PC-9 (cell line): ENCODE measurements at regions of chr18 and their contacts with region 1.

Region 1: DNA sequence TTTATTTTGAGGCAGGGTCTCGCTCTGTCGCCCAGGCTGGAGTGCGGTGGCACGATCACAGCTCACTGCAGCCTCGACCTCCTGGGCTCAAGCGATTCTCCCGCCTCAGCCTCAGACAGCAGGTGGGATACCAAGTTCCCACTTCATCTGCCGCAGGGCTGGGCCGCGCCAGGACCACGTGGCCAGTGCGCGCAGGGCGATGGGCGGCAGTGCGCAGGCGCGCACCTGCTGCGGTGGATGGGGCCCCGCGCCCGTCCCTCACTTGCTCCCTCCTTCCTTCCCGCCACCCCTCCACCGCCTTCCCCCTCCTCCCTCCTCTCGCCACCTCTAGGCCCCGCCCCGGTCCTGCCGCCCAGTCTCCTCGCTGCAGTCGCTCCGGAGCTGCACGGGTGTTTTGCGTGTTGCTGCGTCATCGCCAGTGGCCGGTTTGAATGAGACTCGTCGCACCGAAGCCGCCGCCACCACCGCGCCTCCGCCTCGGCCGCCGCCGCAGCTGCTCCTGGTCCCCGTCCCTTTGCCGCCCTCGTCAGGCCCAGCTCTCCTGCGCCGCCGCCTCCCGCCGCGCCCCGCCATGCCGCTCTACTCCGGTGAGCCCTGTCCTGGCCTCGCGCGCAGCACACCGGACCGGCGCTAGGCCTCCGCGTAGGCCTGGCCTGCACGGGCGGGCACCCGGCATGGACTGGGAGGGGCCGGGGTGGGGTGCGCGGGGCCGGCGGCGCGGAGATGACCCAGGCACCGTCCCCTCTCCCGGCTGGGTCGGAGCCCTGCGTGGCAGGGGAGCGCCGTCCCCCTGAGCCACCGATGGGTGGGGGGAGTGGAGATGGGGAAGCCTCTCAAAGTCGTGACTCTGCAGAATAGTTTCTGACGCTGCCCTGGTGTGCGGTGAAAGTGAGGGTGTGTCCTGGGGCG is at the start of gene USP14:
- DNase-seq: peak; percentile 85 to 97
- H3K4me3 ChIP-seq: peak within 1 kb of the TSS; percentile 99
- H3K27ac ChIP-seq: peak within 1 kb of the TSS; percentile 76
- H3K4me1 ChIP-seq: peaks cover 17% of the 10 kb centered on the region
- H3K27me3 ChIP-seq: no peaks in the 10 kb centered on the region
- CTCF ChIP-seq: no peak
- total RNA-seq, gene USP14: 66.6 and 83.8 TPM in 2 replicates

Region 2: GRCh38 chr18:111292-112014 is 46.9 kb before region 1 on chr18:
- CTCF ChIA-PET with region 1: no interaction called
- POLR2A ChIA-PET with region 1: no interaction called
- intact Hi-C with region 1: loop called (anchors 5 kb)
- DNase-seq: peak; percentile 38 to 85
- H3K4me3 ChIP-seq: peak overlapping the region; percentile 56
- H3K27ac ChIP-seq: no peak overlapping the region; the same call in 1 of the 2 replicates
- H3K4me1 ChIP-seq: peaks cover 7% of the 10 kb centered on the region; the same call in 1 of the 2 replicates
- H3K27me3 ChIP-seq: no peaks in the 10 kb centered on the region
- CTCF ChIP-seq: no peak

Region 3: GRCh38 chr18:199768-200167 is 41.4 kb after region 1 on chr18:
- CTCF ChIA-PET with region 1: no interaction called
- POLR2A ChIA-PET with region 1: interaction called, 11 read pairs
- intact Hi-C with region 1: no loop called
- DNase-seq: no peak
- H3K4me3 ChIP-seq: no peak overlapping the region
- H3K27ac ChIP-seq: no peak overlapping the region
- H3K4me1 ChIP-seq: no peaks in the 10 kb centered on the region
- H3K27me3 ChIP-seq: no peaks in the 10 kb centered on the region
- CTCF ChIP-seq: no peak

Region 4: GRCh38 chr18:267688-268552 is 109.5 kb after region 1 on chr18 and contains the start of gene THOC1:
- CTCF ChIA-PET with region 1: no interaction called
- POLR2A ChIA-PET with region 1: interaction called, 4 read pairs
- intact Hi-C with region 1: loop called (anchors 2 kb)
- DNase-seq: peak; percentile 75 to 89
- H3K4me3 ChIP-seq: peak within 1 kb of the TSS; percentile 64
- H3K27ac ChIP-seq: peak within 1 kb of the TSS; percentile 64
- H3K4me1 ChIP-seq: 0 out of 2 replicates have a peak, but pooled peaks cover 7% of the 10 kb centered on the region
- H3K27me3 ChIP-seq: no peaks in the 10 kb centered on the region
- CTCF ChIP-seq: no peak
- total RNA-seq, gene THOC1: 50.8 and 55.6 TPM in 2 replicates